ENCODE measurements at regions of chr11 and their contacts with region 1.

Region 1: GRCh38 chr11:59668950-59669610 is at the start of gene PATL1:
- DNase-seq: peak; percentile 99
- ATAC-seq: peak; percentile 95
- H3K4me3 ChIP-seq: peak within 1 kb of the TSS; percentile 77
- H3K27ac ChIP-seq: peak within 1 kb of the TSS; percentile 74
- H3K4me1 ChIP-seq: peaks cover 21% of the 10 kb centered on the region
- H3K27me3 ChIP-seq: no peaks in the 10 kb centered on the region
- CTCF ChIP-seq: no peak
- total RNA-seq, gene PATL1: 18.1 and 23.1 TPM in 2 replicates

Region 2: DNA sequence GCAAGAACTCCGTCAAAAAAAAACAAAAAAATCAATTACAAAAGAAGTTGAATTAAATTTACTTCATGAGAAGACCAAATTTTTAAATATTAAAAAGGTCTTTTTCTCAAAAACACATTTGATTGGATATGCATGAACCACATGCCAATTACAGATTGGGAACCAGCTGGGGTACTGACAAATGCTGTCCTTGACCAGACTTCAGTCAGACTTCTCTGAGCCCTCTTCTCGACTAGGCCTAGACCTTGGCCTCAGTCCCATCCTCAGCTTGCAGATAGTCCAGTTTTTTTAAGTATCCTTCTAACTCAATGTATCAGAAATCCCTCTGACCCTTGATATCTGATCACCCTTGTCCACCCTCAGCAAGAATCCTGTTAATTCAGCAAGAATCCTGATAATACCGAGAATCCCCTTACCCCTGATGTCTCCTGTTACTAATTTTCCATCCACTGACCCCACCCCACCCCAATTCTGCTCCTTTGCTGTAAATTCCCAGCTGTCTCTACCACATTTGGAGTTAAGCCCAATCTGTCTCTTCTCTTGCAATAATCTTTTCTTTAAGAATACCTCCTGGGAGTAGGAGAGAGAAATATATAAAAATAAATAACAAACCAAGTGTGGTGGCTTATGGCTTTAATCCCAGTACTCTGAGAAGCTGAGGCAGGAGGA is 126.8 kb before region 1 on chr11:
- CTCF ChIA-PET with region 1: no interaction called
- POLR2A ChIA-PET with region 1: interaction called, 18 read pairs
- intact Hi-C with region 1: no loop called
- DNase-seq: no peak
- ATAC-seq: no peak
- H3K4me3 ChIP-seq: no peak overlapping the region
- H3K27ac ChIP-seq: no peak overlapping the region
- H3K4me1 ChIP-seq: peaks cover 4% of the 10 kb centered on the region; the same call in 1 of the 2 replicates
- H3K27me3 ChIP-seq: no peaks in the 10 kb centered on the region
- CTCF ChIP-seq: no peak

Region 3: GRCh38 chr11:59550368-59550841 is 118.7 kb before region 1 on chr11:
- CTCF ChIA-PET with region 1: no interaction called
- POLR2A ChIA-PET with region 1: interaction called, 13 read pairs
- intact Hi-C with region 1: loop called (anchors 2 kb)
- DNase-seq: peak; percentile 99
- ATAC-seq: peak; percentile 91
- H3K4me3 ChIP-seq: peak overlapping the region; percentile 73
- H3K27ac ChIP-seq: peak overlapping the region; percentile 68
- H3K4me1 ChIP-seq: peaks cover 9% of the 10 kb centered on the region
- H3K27me3 ChIP-seq: no peaks in the 10 kb centered on the region
- CTCF ChIP-seq: peak; percentile 54

Region 4: DNA sequence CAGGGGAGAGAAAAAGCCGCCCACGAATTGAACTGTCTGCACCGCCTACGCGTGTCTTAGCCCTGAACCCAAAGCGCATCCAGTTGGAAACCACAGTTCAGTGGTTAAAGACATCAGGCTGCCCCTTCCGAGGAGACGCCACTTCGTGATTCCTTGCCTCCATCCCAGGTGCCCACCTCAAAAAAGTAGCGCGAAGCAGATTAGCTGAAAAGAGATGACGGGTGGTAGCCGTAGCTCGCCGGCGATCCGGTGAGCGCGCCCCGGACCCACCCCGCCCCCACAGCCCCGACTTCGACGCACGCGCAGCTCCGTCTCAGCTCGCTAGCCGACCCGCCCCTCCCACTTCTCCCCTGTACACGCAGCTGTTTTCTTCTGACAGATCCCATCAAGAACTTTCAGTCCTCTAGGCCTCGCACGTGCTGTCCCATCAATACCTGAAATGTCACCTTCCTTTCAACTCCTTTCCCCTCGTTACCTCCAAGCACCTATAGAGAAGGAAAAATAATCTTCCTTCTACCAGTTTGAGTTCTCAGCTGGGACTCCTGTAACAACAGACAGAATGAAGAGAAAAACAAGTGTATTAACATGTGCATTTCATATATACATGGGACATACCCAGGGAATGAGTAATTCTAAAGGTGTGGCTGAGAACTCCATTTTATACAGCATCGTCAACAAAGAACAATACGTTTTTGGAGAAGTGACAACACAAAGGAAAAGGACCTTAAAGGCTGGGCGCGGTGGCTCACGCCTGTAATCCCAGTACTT is 108.2 kb before region 1 on chr11:
- CTCF ChIA-PET with region 1: interaction called, 12 read pairs
- POLR2A ChIA-PET with region 1: interaction called, 4 read pairs
- intact Hi-C with region 1: no loop called
- DNase-seq: peak; percentile 95
- ATAC-seq: peak; percentile 64
- H3K4me3 ChIP-seq: peak overlapping the region; percentile 96
- H3K27ac ChIP-seq: peak overlapping the region; percentile 89
- H3K4me1 ChIP-seq: peaks cover 6% of the 10 kb centered on the region; the same call in 1 of the 2 replicates
- H3K27me3 ChIP-seq: no peaks in the 10 kb centered on the region
- CTCF ChIP-seq: no peak

Region 5: GRCh38 chr11:59615637-59616395 is 53.3 kb before region 1 on chr11 and contains the start of gene OSBP:
- CTCF ChIA-PET with region 1: interaction called, 8 read pairs
- POLR2A ChIA-PET with region 1: interaction called, 15 read pairs
- intact Hi-C with region 1: loop called (anchors 2 kb)
- DNase-seq: peak; percentile 100
- ATAC-seq: peak; percentile 86
- H3K4me3 ChIP-seq: peak within 1 kb of the TSS; percentile 95
- H3K27ac ChIP-seq: peak within 1 kb of the TSS; percentile 35
- H3K4me1 ChIP-seq: peaks cover 39% of the 10 kb centered on the region
- H3K27me3 ChIP-seq: no peaks in the 10 kb centered on the region
- CTCF ChIP-seq: no peak
- total RNA-seq, gene OSBP: 36.3 and 59.4 TPM in 2 replicates

Region 6: DNA sequence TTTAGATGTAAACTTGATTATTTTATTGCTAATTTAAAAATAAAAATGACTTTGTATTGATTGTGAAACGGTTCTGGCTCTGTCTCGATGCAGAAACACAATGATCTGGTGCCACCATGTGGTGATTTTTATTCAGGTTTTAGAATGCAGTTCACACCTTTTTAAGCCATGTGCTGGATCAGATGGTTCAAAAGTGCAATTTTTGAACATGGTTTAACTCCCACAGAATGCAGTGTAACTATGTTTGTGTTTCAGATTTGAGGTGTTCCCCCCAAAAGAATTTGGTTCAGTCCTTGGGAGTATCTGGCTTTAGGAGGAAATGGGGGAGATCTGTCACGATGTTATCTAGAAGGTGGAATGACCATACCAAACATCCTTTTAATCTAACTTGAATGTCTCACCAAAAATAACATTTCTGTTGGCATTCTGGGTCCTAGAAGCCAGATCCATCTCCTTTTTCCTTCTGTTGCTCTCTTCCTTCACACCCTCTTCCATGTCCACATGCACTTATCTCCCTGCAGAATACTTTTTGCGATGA is 133.6 kb after region 1 on chr11:
- CTCF ChIA-PET with region 1: interaction called, 5 read pairs
- POLR2A ChIA-PET with region 1: no interaction called
- intact Hi-C with region 1: loop called (anchors 10 kb)
- DNase-seq: peak; percentile 84
- ATAC-seq: peak; percentile 46
- H3K4me3 ChIP-seq: no peak overlapping the region
- H3K27ac ChIP-seq: no peak overlapping the region
- H3K4me1 ChIP-seq: peaks cover 25% of the 10 kb centered on the region
- H3K27me3 ChIP-seq: no peaks in the 10 kb centered on the region
- CTCF ChIP-seq: peak; percentile 89